GM13977 (cell line): ENCODE measurements at regions of chr19 and their contacts with region 1.

Region 1: GRCh38 chr19:7104747-7105447 is 35.4 kb downstream of the ZNF557 start:
- DNase-seq: no peak
- CTCF ChIP-seq: no peak

Region 2: DNA sequence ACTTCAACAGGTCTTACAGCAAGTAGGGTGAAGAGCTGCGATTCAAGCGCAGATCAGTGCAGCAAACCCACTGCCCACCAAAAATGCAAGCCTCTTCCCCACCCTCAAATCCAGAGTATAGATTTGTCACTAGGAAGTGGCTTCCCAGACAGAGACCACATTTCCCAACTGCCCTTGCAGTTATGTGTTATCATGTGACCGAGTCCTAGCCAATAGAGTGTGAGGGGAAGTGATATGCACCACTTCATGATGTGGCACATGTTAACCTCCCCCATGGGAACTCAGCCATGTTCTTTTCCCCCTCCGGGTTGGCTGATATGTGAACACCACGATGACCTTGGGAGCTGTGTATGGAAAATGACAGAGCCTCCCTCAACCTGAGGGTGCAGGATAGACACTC is 134.5 kb before region 1 on chr19:
- in situ Hi-C with region 1: no loop called
- DNase-seq: no peak
- CTCF ChIP-seq: no peak

Region 3: GRCh38 chr19:7340959-7341837 is 236.3 kb after region 1 on chr19:
- in situ Hi-C with region 1: loop called (anchors 10 kb)
- DNase-seq: no peak
- CTCF ChIP-seq: peak; percentile 93